ENCODE measurements at regions of chr10 and their contacts with region 1.

Region 1: DNA sequence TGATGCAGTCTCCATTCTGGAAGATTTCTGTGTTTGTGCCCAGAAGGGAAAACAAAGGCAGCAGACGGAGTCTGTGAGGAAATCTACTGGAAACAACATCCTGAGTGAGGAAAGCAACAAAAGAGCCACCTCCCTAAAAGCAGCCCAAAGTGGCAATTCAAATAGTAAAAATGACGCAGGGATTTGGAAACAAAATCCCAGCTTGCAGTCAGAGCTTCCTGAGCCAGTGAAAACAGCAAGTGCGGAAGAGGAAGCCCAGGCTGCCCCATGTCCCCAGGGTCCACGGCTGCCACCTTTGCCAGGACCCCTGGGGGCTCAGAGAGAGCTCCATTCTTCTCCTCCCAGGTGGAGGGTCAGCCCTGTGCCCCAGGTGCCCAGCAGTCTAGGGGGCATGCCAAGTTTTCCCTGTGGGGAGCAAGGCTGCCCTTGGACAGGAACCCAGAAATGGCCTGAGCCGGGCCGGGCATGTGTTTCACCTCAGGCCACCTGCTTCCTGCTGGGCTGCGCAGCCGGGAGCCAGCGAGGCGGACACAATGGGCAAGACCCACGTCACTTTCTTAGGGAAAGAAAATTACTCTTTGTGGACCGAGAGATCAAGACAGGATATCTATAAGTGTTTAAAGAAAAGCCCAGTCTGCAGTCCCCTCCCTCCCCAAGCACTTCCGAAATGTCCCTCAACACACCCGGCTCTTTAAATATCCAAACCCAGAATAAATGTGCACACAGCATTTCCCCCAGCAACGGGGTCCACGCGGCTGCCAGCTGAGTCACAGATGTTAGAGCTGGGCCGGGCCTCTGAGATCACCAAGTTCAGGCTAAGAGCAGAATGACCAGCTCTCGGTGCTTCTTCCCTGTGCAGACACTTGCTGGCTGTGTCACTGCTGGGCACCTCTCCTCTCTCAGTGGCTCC is 231.1 kb downstream of the ARHGAP12 start:
- DNase-seq: peak; percentile 86
- H3K4me3 ChIP-seq: peak overlapping the region; percentile 52
- H3K27ac ChIP-seq: peak overlapping the region; percentile 98
- H3K4me1 ChIP-seq: peaks cover 68% of the 10 kb centered on the region
- H3K27me3 ChIP-seq: no peaks in the 10 kb centered on the region
- CTCF ChIP-seq: no peak

Region 2: GRCh38 chr10:31557854-31558253 is 139.7 kb before region 1 on chr10:
- intact Hi-C with region 1: no loop called
- DNase-seq: no peak
- H3K4me3 ChIP-seq: no peak overlapping the region
- H3K27ac ChIP-seq: no peak overlapping the region
- H3K4me1 ChIP-seq: no peaks in the 10 kb centered on the region
- H3K27me3 ChIP-seq: no peaks in the 10 kb centered on the region
- CTCF ChIP-seq: no peak

Region 3: DNA sequence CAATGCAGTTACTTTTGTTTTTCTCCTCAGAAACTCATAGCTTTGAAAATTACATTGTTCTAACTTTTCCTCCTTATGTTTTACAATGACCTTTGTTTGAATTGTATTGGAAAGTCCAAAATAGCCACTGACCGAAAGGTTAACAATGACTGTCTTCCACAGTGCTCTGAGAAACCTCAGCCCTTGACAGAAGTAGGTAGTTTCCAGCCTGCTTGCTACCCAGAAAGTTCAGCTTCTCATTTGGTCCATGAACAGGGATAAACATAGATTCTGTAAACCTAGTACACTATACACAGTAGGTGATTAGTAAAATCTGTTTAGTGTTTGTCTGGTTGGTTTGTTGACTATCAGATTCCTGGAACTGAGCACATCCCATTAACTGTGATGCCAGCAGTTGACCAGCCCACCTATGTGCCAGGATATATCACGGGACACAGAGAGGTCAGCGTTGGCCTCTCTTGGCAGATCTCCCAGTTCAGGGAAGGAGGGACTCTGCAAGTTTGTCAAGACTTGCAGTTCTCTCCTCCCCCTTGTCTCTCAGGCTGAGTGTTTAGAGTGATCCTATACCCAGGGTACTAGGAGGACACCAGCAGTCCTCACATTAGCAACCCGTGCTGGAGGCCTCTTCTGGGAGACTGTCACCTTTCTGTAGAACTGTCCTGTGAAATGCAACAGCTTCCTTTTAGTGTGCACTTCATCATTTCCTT is 66.5 kb before region 1 on chr10:
- intact Hi-C with region 1: loop called (anchors 2 kb)
- DNase-seq: no peak
- H3K4me3 ChIP-seq: no peak overlapping the region
- H3K27ac ChIP-seq: peak overlapping the region; percentile 46
- H3K4me1 ChIP-seq: peaks cover 14% of the 10 kb centered on the region
- H3K27me3 ChIP-seq: no peaks in the 10 kb centered on the region
- CTCF ChIP-seq: no peak

Region 4: GRCh38 chr10:31908157-31908556 is 210.6 kb after region 1 on chr10:
- intact Hi-C with region 1: no loop called
- DNase-seq: no peak
- H3K4me3 ChIP-seq: no peak overlapping the region
- H3K27ac ChIP-seq: no peak overlapping the region
- H3K4me1 ChIP-seq: peaks cover 49% of the 10 kb centered on the region
- H3K27me3 ChIP-seq: no peaks in the 10 kb centered on the region
- CTCF ChIP-seq: no peak

Measured in left ventricle myocardium inferior (tissue), 1 donor.